B cell (primary cell): ENCODE measurements at regions of chr5 and their contacts with region 1.

Region 1: DNA sequence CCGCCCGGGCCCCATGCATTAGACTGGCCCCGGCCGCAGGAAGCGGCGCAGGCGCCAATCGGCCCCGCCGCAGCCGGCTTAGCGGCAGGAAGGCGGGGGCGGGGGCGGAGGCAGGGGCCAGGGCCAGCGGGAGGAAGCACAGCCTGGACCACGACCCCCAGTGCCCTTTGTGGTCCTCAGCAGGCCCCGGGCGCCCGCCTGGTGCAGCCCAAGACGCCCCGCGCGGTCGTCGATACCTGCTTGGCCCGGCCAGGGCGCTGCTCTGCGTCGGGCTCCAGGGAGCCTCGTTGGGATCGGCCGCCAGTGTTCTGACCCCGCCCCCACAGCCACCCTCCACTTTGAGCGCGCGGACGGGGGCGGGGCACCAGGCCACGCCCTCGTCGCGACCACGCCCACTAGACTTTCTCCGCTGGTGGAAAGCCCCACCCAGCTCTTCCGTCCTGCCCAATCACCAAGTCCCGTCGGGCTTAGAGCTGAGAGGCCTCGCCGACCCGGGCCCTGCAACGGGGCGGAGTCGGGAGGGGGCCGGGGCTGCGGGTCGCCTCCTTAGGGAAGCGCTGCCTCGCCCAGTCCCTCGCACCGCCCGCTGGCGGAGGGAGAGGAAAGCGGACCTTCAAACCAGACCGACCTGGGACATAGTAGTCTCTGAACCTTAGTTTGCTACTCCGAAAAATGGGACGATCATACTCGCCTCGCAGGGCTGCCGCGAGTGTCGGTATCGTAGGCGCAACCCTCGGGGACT is at the start of gene PDLIM7:
- DNase-seq: peak; percentile 97
- ATAC-seq: peak; percentile 84
- H3K4me3 ChIP-seq: peak within 1 kb of the TSS; percentile 9 to 68 (median 65)
- H3K4me3 Mint-ChIP-seq: peak within 1 kb of the TSS; percentile 93
- H3K27ac ChIP-seq: no peak within 1 kb of the TSS
- H3K27ac Mint-ChIP-seq: peak within 1 kb of the TSS; percentile 73
- H3K4me1 ChIP-seq: peaks cover 58 to 72% of the 10 kb centered on the region in 2 donors
- H3K4me1 Mint-ChIP-seq: peaks cover 75% of the 10 kb centered on the region
- H3K27me3 ChIP-seq: peaks cover 0 to 10% (median 4%) of the 10 kb centered on the region in 4 experiments
- H3K27me3 Mint-ChIP-seq: peaks cover 3% of the 10 kb centered on the region
- CTCF ChIP-seq: no peak
- total RNA-seq, gene PDLIM7: 24.2 and 25.8 TPM in 2 replicates

Region 2: DNA sequence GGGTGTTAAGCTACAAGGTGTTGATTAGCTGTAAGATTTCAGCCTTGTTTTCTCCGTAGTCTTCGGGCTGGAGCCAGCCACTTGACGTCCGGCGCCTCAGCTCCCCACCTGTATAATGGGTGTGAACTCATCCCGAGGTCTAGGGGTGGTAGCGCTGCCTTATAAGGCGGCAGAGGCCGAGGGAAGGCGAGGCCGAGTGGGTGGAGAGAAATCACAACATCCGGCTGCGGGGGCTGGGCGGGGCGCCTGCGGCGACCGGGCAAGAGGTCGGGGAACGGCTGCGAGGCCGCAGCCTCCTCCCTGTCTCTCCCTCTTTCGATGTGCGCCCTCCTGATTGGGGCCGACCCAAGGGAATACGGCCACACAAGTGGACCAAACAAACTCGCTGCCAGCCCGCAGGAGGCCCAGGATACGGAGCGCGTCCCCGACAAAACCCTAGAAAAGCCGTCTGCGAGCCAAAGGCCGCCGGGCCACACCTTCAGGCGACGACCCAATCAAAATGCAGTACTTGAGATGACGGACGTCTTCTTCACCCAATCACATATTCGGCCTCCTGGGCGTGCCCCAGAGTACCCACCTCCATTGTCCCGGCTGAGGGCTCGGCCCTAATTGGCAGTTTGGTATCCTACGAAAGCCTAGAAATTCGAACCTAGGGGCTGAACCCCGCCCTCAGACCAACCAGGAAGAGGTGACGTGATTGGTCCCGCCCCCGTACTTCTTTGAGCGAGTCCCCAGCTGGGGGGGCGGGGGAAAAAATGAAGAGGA is 71.5 kb before region 1 on chr5:
- CTCF ChIA-PET with region 1: interaction called, 4 read pairs
- POLR2A ChIA-PET with region 1: interaction called, 5 read pairs
- intact Hi-C with region 1: loop called (anchors 1 kb)
- DNase-seq: peak; percentile 100
- ATAC-seq: peak; percentile 82
- H3K4me3 ChIP-seq: peak overlapping the region; percentile 28 to 74 (median 61)
- H3K4me3 Mint-ChIP-seq: peak overlapping the region; percentile 93
- H3K27ac ChIP-seq: peak overlapping the region; percentile 82 to 88
- H3K27ac Mint-ChIP-seq: peak overlapping the region; percentile 97
- H3K4me1 ChIP-seq: peaks cover 47 to 49% of the 10 kb centered on the region in 2 donors
- H3K4me1 Mint-ChIP-seq: peaks cover 49% of the 10 kb centered on the region
- H3K27me3 ChIP-seq: no peaks in the 10 kb centered on the region
- H3K27me3 Mint-ChIP-seq: no peaks in the 10 kb centered on the region
- CTCF ChIP-seq: no peak

Region 3: DNA sequence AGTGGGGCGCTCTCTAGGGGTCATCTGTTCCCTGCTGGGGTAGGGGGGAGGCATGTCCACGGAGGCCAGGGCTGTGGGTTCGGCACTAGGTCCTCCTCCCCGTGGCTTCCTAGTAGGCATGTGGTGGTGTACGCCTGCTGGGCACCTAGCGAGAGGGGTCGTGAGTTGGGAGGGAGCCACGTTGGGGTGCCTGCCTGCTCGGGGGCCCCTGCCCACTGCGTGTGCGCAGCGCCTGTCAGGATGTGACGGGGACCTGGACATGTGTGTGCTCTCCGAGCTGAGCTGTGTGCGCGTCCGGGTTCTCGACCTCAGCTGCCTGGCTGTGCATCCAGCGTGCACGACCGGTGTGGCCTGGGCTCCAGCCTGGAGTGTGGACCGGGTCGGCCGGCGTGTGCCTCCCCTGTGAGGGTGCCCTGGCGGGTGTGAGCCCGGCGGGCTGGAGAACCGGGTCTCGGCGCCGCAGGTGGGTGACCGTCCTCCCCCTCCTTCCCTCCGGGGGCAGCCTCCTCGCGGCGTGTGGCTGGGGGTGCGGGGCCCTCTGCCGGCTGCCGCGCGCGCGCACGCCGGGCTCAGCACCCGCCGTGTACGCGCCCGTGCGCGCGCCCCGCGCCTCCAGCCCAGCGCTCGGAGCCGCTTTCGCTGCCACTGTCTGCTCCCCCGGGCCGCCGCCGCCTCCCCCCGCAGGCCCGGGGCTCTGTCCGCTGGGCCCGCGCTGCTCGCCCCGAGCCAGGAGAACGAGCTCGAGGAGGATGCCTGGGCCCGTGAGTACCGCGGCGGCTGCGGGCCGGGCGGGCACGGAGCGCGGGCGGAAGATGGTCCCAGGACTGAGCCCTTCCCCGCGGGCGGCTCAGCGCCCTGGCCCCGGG is 51.0 kb before region 1 on chr5 and contains the start of gene PRR7:
- CTCF ChIA-PET with region 1: interaction called, 10 read pairs
- POLR2A ChIA-PET with region 1: interaction called, 3 read pairs
- intact Hi-C with region 1: no loop called
- DNase-seq: peak; percentile 91
- ATAC-seq: peak; percentile 64
- H3K4me3 ChIP-seq: peak within 1 kb of the TSS in 4 of 5 experiments; percentile 45 to 66 (median 54)
- H3K4me3 Mint-ChIP-seq: peak within 1 kb of the TSS; percentile 82
- H3K27ac ChIP-seq: peak within 1 kb of the TSS; percentile 68 to 77
- H3K27ac Mint-ChIP-seq: peak within 1 kb of the TSS; percentile 92
- H3K4me1 ChIP-seq: peaks cover 34 to 50% of the 10 kb centered on the region in 2 donors
- H3K4me1 Mint-ChIP-seq: peaks cover 48% of the 10 kb centered on the region
- H3K27me3 ChIP-seq: peaks cover 0 to 14% (median 0%) of the 10 kb centered on the region in 4 experiments
- H3K27me3 Mint-ChIP-seq: no peaks in the 10 kb centered on the region
- CTCF ChIP-seq: no peak
- total RNA-seq, gene PRR7: 4.8 and 5.6 TPM in 2 replicates

Region 4: DNA sequence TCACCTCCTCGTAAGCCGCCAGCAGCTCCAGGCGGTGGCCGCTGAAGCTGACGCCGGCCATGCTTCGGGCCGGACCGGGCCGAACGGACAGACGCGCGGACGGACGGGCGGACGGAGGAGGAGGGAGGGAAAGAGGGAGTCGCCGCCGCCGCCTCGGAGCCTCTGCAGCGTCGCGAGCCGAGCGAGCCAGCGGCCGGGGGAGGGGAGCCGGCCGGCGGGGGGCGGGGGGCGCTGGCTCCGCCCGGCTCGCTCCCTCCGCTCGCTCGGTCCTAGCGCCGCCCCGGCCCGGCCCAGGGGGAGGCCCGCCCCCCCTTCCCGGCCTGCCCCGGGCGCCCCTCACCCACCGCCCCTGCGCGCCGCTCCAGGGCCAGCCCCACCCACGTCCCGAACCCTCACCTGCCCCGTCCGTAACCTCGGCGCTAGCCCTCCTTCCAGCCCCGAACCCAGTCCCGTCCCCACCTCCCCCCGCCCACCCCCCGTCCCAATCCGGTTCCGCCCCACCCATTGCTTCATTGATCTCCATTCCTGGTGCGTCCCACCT is 23.9 kb before region 1 on chr5 and contains the start of gene DBN1:
- CTCF ChIA-PET with region 1: interaction called, 12 read pairs
- POLR2A ChIA-PET with region 1: interaction called, 7 read pairs
- intact Hi-C with region 1: no loop called
- DNase-seq: no peak
- ATAC-seq: peak; percentile 39
- H3K4me3 ChIP-seq: peak within 1 kb of the TSS in 3 of 5 experiments; percentile 41 to 60 (median 49)
- H3K4me3 Mint-ChIP-seq: peak within 1 kb of the TSS; percentile 81
- H3K27ac ChIP-seq: no peak within 1 kb of the TSS
- H3K27ac Mint-ChIP-seq: peak within 1 kb of the TSS; percentile 50
- H3K4me1 ChIP-seq: peaks cover 7 to 19% of the 10 kb centered on the region in 2 donors
- H3K4me1 Mint-ChIP-seq: peaks cover 19% of the 10 kb centered on the region
- H3K27me3 ChIP-seq: peaks cover 0 to 24% (median 7%) of the 10 kb centered on the region in 4 experiments
- H3K27me3 Mint-ChIP-seq: peaks cover 13% of the 10 kb centered on the region
- CTCF ChIP-seq: no peak
- total RNA-seq, gene DBN1: 1.4 and 2.4 TPM in 2 replicates

Region 5: DNA sequence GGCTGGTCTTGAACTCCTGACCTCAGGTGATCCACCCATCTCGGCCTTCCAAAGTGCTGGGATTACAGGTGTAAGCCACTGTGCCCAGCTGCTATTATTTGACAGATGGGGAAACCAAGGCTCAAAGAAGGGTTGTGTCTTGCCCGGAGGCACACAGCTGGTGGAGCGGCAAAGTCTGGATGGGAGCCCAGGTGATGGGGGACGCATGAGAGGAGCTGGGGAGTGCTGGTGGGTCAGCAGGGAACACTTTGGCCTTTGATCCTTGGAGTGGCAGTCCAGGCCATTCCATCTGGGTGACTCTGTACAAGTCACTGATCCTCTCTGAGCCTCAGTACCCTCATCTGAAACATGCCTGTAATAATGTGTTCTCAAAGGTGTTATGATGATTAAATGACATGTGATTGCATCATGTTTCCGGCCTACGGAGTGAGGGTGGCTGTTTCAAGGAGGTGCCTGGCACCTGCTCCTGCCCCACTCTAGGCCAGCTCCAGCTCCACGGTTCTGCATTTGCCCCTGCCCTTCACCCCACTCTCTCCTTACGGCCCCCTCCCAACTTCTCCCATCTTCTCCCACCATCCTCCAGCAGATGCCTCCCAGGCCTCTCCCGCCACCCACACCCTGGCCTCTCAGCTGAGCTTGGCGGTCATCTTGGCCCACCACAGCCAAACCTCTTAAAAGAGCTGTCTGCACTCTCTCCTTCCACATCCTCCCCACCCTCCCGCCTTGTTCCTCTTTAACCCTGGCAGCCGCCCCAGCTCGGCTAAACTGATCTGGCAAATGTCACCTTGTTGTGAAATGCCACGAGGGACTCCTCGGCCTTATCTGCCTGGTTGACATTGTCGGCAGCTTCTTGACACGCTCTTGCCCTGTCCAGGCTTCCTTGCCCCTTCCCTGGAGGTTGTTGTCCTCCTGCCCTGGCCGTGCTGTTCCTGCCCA is 18.5 kb before region 1 on chr5:
- CTCF ChIA-PET with region 1: interaction called, 12 read pairs
- POLR2A ChIA-PET with region 1: interaction called, 7 read pairs
- intact Hi-C with region 1: no loop called
- DNase-seq: peak; percentile 56
- ATAC-seq: peak; percentile 62
- H3K4me3 ChIP-seq: no peak overlapping the region
- H3K4me3 Mint-ChIP-seq: peak overlapping the region; percentile 34
- H3K27ac ChIP-seq: peak overlapping the region in 1 of 2 donors; percentile 3
- H3K27ac Mint-ChIP-seq: peak overlapping the region; percentile 81
- H3K4me1 ChIP-seq: peaks cover 14 to 25% of the 10 kb centered on the region in 2 donors
- H3K4me1 Mint-ChIP-seq: peaks cover 30% of the 10 kb centered on the region
- H3K27me3 ChIP-seq: peaks cover 0 to 5% (median 1%) of the 10 kb centered on the region in 4 experiments
- H3K27me3 Mint-ChIP-seq: peaks cover 4% of the 10 kb centered on the region
- CTCF ChIP-seq: no peak

Region 6: GRCh38 chr5:177509381-177509951 is 12.0 kb after region 1 on chr5 and contains the start of gene DOK3:
- CTCF ChIA-PET with region 1: interaction called, 70 read pairs
- POLR2A ChIA-PET with region 1: interaction called, 19 read pairs
- intact Hi-C with region 1: loop called (anchors 1 kb)
- DNase-seq: peak; percentile 81
- ATAC-seq: peak; percentile 39
- H3K4me3 ChIP-seq: peak within 1 kb of the TSS; percentile 57 to 95 (median 75)
- H3K4me3 Mint-ChIP-seq: peak within 1 kb of the TSS; percentile 94
- H3K27ac ChIP-seq: peak within 1 kb of the TSS; percentile 91 to 96
- H3K27ac Mint-ChIP-seq: peak within 1 kb of the TSS; percentile 98
- H3K4me1 ChIP-seq: peaks cover 38 to 53% of the 10 kb centered on the region in 2 donors
- H3K4me1 Mint-ChIP-seq: peaks cover 55% of the 10 kb centered on the region
- H3K27me3 ChIP-seq: no peaks in the 10 kb centered on the region
- H3K27me3 Mint-ChIP-seq: no peaks in the 10 kb centered on the region
- CTCF ChIP-seq: no peak
- total RNA-seq, gene DOK3: 113 and 115 TPM in 2 replicates

Region 7: DNA sequence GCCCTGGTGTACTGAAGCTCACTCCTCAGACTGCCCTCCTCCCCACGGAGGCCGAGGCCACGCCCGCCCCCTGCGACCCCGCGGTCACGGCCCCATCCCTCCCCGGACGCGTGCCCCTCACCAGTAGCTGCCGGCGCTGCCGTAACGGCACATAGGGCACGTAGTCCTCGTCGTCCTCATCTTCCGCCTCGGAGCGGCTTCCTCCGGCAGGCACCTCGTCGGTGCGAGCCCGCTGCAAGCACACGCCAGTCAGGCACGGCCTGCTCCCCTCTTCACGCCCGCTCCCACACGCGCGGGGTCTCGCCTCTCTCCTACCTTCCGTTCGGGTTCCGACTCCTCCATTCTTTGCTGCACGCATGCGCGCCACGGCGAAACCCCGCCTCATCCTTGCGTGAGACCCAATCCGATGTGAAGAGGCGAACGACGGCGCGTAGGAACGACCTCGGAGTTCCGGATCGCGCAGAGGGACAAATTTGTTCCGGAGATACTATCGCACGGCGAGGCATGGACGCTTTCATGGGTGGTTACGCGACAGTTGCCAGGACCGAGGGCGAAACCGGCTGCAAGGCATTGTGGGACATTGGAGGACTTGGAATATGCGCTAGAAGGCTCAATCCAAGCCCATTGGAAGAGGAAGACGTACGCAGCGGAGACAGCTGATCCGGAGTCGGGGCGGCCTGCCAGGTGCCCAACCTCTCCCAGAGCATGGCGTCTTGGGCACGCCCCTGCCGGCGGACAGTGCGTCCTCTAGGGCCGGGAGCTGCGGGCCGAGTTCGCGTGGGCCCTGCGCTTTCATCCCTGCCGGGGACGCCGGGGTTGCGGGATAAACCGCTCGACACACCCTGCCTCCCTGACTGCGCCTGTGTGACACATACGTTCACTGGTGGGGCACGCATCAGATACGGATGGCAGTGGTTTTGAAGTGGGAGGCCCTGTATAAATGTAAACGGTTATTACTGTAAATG is 19.4 kb after region 1 on chr5 and contains the start of gene DDX41:
- CTCF ChIA-PET with region 1: interaction called, 17 read pairs
- POLR2A ChIA-PET with region 1: interaction called, 19 read pairs
- intact Hi-C with region 1: no loop called
- DNase-seq: peak; percentile 96
- ATAC-seq: peak; percentile 90
- H3K4me3 ChIP-seq: peak within 1 kb of the TSS; percentile 78 to 96 (median 89)
- H3K4me3 Mint-ChIP-seq: peak within 1 kb of the TSS; percentile 91
- H3K27ac ChIP-seq: peak within 1 kb of the TSS; percentile 46 to 70
- H3K27ac Mint-ChIP-seq: peak within 1 kb of the TSS; percentile 93
- H3K4me1 ChIP-seq: peaks cover 7 to 28% of the 10 kb centered on the region in 2 donors
- H3K4me1 Mint-ChIP-seq: peaks cover 47% of the 10 kb centered on the region
- H3K27me3 ChIP-seq: no peaks in the 10 kb centered on the region
- H3K27me3 Mint-ChIP-seq: no peaks in the 10 kb centered on the region
- CTCF ChIP-seq: no peak
- total RNA-seq, gene DDX41: 110 and 111 TPM in 2 replicates